ENCODE measurements at regions of chr11 and their contacts with region 1.

Region 1: GRCh38 chr11:8682303-8683114 is at the starts of genes RPL27A and TRIM66:
- DNase-seq: peak; percentile 95 to 100 (median 99)

Region 2: DNA sequence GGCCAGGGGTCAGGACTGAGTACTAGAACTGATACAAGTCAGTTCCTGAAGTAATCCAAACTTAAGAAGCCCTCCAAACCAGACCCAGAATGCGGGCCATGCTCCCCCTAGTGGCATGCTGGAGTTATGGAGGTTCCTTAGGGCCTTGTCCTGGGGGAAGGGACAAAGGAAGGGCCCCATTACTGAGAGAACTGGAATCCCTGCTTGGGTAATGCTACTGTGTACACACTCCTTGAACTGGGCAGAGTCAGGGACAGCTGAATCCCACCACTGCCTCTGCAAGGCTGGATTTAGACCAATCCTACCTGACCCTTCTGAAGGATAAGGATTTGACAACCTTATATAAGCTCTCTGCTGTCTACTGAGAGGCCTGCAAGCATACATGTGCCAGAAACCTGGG is 131.1 kb after region 1 on chr11:
- intact Hi-C with region 1: loop called (anchors 5 kb)
- DNase-seq: peak; percentile 41 to 90 (median 75)

Measured in head of caudate nucleus (tissue), 42 donors.